ENCODE measurements at regions of chr6 and their contacts with region 1.

Region 1: DNA sequence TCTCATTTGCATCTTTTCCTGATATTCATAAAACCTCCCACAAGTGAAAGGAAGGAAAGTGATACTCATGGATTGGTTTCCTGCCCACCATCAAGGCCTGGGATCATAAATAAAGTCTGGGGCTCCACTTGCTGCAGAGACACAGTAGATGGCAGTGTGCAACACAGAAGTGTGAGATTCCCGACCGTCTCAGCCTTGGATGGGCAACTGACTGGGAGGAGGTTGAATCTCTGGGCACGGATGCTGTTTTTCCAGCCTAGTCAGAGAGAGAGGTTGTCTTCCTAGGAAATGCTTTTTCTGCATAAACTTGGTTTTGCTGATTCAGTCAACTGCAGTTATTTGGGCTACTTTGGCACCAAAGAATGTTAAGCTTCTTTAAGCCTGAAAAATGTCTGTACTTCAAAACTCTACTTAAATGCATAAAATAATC is 9.9 kb upstream of the RFPL4B start:
- DNase-seq: peak in 1 of 2 experiments; percentile 24
- H3K4me3 ChIP-seq: no peak overlapping the region
- H3K27ac ChIP-seq: no peak overlapping the region
- H3K4me1 ChIP-seq: no peaks in the 10 kb centered on the region
- H3K27me3 ChIP-seq: no peaks in the 10 kb centered on the region
- CTCF ChIP-seq: peak; percentile 65

Region 2: GRCh38 chr6:112163295-112164257 is 173.6 kb before region 1 on chr6:
- CTCF ChIA-PET with region 1: interaction called, 11 read pairs
- POLR2A ChIA-PET with region 1: no interaction called
- intact Hi-C with region 1: no loop called
- DNase-seq: no peak
- H3K4me3 ChIP-seq: no peak overlapping the region
- H3K27ac ChIP-seq: no peak overlapping the region
- H3K4me1 ChIP-seq: no peaks in the 10 kb centered on the region
- H3K27me3 ChIP-seq: no peaks in the 10 kb centered on the region
- CTCF ChIP-seq: peak; percentile 74

Region 3: DNA sequence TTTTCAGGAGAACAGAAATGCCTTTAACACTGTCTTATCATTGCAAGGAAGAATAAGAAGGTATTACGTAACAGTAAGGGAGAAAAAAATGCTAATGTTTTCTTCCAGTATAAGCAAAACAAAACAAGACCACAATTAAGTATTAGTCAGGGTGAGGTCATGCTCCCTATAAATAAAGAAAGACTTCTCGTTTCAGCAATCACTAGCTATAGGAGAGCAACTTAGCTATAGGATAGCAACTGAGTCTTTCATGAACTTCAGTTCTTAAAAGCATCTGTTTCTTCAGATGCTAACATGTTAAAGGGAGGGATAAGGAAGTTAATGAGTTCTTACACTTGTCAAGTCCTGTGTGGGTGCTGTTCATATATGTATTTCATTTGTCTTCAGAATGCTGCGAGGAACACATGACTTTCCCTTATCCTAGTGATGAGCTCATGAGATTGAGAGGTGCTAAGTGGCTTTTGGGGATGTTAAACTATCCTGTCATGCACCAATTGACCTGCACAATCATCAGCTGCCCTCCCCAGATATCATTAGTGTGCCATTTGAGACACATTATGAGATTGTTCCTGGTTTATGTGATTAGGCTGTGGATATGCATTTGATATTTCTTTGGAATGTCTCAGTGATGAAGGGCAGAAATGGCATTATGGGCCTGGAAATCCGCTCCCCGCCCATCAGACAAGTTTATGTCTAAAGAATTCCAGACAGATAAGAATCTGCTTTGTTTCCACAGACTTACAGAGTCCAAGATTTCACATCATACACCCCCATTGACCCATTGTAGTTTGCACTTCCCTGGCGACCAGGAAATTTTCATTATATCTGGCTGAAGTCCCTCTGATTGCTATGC is 120.3 kb before region 1 on chr6:
- CTCF ChIA-PET with region 1: no interaction called
- POLR2A ChIA-PET with region 1: no interaction called
- intact Hi-C with region 1: no loop called
- DNase-seq: peak; percentile 52 to 96
- H3K4me3 ChIP-seq: peak overlapping the region; percentile 1
- H3K27ac ChIP-seq: peak overlapping the region; percentile 79
- H3K4me1 ChIP-seq: peaks cover 69% of the 10 kb centered on the region
- H3K27me3 ChIP-seq: no peaks in the 10 kb centered on the region
- CTCF ChIP-seq: no peak

Region 4: GRCh38 chr6:113909234-113909856 is 1572.1 kb after region 1 on chr6:
- CTCF ChIA-PET with region 1: no interaction called
- POLR2A ChIA-PET with region 1: interaction called, 13 read pairs
- intact Hi-C with region 1: no loop called
- DNase-seq: peak; percentile 5 to 57
- H3K4me3 ChIP-seq: no peak overlapping the region
- H3K27ac ChIP-seq: no peak overlapping the region
- H3K4me1 ChIP-seq: 0 out of 2 replicates have a peak, but pooled peaks cover 7% of the 10 kb centered on the region
- H3K27me3 ChIP-seq: no peaks in the 10 kb centered on the region
- CTCF ChIP-seq: peak; percentile 99

Region 5: DNA sequence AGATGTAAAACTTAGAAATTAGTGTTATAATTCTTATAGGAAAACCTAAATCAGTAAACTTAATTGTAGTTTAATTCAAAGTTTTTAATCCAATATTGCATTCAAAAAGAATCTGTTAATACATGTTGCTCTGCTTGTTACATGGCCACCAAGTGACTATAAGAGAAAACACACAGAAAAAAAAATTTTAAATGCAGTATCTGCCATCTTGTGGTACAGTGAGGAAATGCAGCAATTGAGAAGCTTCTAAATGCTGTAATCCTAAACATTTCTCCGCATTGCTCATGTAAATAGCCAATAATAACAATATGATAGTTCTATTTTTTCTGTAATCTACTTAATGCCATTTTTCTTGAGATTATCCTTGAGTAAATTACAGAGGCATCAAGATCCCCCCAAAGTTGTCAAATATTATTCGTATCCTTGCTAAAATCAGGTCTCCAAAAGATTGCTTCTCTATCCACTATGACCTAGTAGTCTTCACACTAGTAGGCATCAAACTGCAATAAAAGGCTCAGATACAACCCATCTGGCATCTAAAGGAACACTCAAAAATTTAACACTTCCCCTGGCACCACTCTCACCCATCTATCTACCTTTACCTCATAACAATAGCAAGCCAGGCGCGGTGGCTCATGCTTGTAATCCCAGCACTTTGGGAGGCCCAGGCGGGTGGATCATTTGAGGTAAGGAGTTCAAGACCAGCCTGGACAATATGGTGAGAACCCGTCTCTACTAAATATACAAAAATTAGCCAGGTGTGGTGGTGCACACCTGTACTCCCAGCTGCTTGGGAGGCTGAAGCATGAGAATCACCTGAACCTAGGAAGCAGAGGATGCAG is 1599.1 kb after region 1 on chr6:
- CTCF ChIA-PET with region 1: no interaction called
- POLR2A ChIA-PET with region 1: no interaction called
- intact Hi-C with region 1: loop called (anchors 10 kb)
- DNase-seq: peak; percentile 7 to 69
- H3K4me3 ChIP-seq: no peak overlapping the region
- H3K27ac ChIP-seq: no peak overlapping the region
- H3K4me1 ChIP-seq: no peaks in the 10 kb centered on the region
- H3K27me3 ChIP-seq: no peaks in the 10 kb centered on the region
- CTCF ChIP-seq: peak; percentile 99